WTC11 (cell line): ENCODE measurements at regions of chr11 and their contacts with region 1.

Region 1: GRCh38 chr11:125257190-125257579 is 92.6 kb downstream of the PKNOX2 start:
- DNase-seq: peak; percentile 69
- ATAC-seq: peak; percentile 76
- H3K4me3 Mint-ChIP-seq: no peak overlapping the region
- H3K27ac Mint-ChIP-seq: no peak overlapping the region
- H3K4me1 Mint-ChIP-seq: peaks cover 43% of the 10 kb centered on the region
- H3K27me3 Mint-ChIP-seq: peaks cover 12% of the 10 kb centered on the region
- CTCF ChIP-seq: peak; percentile 32; the same call in 1 of the 2 replicates

Region 2: GRCh38 chr11:124920870-124921609 is 336.1 kb before region 1 on chr11:
- CTCF ChIA-PET with region 1: no interaction called
- POLR2A ChIA-PET with region 1: interaction called, 10 read pairs
- DNase-seq: peak; percentile 78
- ATAC-seq: peak; percentile 76
- H3K4me3 Mint-ChIP-seq: peak overlapping the region; percentile 61
- H3K27ac Mint-ChIP-seq: no peak overlapping the region
- H3K4me1 Mint-ChIP-seq: no peaks in the 10 kb centered on the region
- H3K27me3 Mint-ChIP-seq: peaks cover 92% of the 10 kb centered on the region
- CTCF ChIP-seq: no peak

Region 3: DNA sequence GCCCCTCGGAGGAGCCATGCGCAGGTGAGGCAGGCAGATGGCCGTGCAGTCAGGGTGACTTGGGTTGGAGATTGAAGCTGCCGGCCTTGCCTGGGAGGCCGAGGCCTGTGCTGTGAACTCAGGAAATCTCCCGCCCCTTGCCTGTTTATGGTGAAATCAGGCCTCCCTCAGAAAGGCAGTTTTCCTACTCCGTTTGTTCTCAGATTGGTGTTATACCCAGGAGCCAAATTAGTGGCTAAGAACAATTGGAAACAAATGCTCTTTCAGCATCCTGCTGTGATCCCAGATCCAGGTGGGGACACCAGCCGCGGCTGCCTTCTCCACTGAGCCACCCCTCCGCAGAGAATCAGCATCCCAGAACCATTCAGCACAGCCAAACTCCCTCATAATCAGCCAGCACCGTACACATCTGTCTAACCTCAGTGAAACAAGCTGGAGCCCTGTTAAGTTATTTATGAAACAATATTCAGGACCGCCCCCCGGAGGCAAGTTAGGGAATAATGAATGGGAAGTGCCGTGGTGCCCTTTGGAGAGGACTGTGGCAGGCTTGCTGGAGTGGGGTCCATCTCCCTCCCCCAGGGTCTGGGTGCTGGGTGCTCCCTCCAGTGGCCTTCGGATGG is 32.7 kb before region 1 on chr11:
- CTCF ChIA-PET with region 1: interaction called, 18 read pairs
- POLR2A ChIA-PET with region 1: no interaction called
- DNase-seq: peak; percentile 52
- ATAC-seq: peak; percentile 36
- H3K4me3 Mint-ChIP-seq: no peak overlapping the region
- H3K27ac Mint-ChIP-seq: peak overlapping the region; percentile 30; the same call in 1 of the 2 replicates
- H3K4me1 Mint-ChIP-seq: peaks cover 55% of the 10 kb centered on the region
- H3K27me3 Mint-ChIP-seq: peaks cover 6% of the 10 kb centered on the region; the same call in 1 of the 2 replicates
- CTCF ChIP-seq: no peak; the same call in 1 of the 2 replicates

Region 4: GRCh38 chr11:125268611-125269010 is 11.4 kb after region 1 on chr11:
- CTCF ChIA-PET with region 1: interaction called, 15 read pairs
- POLR2A ChIA-PET with region 1: no interaction called
- DNase-seq: no peak
- ATAC-seq: no peak
- H3K4me3 Mint-ChIP-seq: no peak overlapping the region
- H3K27ac Mint-ChIP-seq: no peak overlapping the region
- H3K4me1 Mint-ChIP-seq: peaks cover 30% of the 10 kb centered on the region
- H3K27me3 Mint-ChIP-seq: peaks cover 18% of the 10 kb centered on the region
- CTCF ChIP-seq: no peak